ENCODE measurements at regions of chr14 and their contacts with region 1.

Region 1: DNA sequence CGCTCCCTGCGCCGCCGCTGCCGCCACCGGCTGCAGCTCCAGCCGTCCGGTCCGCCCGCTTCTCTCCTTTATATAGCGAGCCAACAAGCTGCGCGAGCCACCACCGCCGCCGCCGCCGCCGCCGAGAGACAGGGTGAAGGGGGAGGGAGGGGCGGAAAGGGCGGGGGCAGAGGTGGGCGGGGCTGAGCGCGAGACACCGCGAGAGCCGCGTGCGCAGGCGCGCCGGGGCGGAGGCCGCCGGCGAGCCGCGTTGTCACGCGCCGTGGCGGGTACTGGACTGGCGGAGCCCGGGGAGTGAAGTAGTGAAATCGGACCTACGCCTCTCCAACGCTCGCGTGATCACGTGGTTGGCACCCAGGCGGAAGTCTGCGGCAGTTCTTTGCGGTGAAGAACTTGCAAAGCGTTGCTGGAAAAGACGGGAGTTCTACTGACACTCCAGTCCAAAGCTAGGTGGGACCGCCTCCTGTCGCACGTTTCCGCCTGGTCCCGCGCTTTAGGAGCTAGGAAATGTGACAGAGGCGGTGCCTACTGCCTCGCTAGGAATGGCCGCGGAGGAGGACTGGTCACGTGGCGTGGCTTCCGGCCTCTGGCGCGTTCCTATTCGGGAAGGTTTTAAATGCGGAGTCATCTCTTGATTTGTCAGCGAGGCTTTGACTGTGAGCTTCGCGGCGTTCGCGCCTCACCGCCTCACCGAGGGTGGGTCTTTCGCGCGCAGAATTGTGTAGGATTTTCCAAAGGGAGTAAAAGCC is at the start of gene GTF2A1:
- DNase-seq: peak; percentile 77
- ATAC-seq: peak; percentile 92
- H3K4me3 ChIP-seq: peak within 1 kb of the TSS; percentile 70 to 96
- H3K27ac ChIP-seq: peak within 1 kb of the TSS; percentile 95
- H3K4me1 ChIP-seq: peaks cover 7% of the 10 kb centered on the region
- H3K27me3 ChIP-seq: no peaks in the 10 kb centered on the region
- CTCF ChIP-seq: no peak
- total RNA-seq, gene GTF2A1: 34.4 TPM

Region 2: GRCh38 chr14:80718940-80719339 is 502.1 kb before region 1 on chr14:
- CTCF ChIA-PET with region 1: no interaction called
- POLR2A ChIA-PET with region 1: no interaction called
- in situ Hi-C with region 1: no loop called
- intact Hi-C with region 1: no loop called
- DNase-seq: no peak
- ATAC-seq: no peak
- H3K4me3 ChIP-seq: no peak overlapping the region
- H3K27ac ChIP-seq: no peak overlapping the region
- H3K4me1 ChIP-seq: no peaks in the 10 kb centered on the region
- H3K27me3 ChIP-seq: no peaks in the 10 kb centered on the region
- CTCF ChIP-seq: no peak

Region 3: DNA sequence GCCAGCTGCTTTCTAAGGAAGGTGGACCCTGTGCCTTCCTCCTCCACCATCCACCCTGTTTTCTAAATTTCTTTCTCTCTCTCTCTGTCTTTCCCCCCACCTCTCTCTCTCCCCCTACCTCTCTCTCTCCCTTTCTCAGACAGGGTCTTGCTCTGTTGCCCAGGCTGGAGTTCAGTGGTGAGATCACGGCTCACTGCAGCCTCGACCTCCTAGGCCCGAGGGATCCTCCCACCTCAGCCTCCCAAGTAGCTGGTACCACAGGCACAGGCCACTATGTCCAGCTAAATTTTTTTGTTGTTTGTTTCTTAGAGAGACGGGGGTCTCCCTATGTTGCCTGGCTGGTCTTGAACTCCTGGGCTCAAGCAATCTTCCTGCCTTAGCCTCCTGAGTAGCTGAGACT is 238.9 kb after region 1 on chr14:
- CTCF ChIA-PET with region 1: no interaction called
- POLR2A ChIA-PET with region 1: interaction called, 12 read pairs
- in situ Hi-C with region 1: no loop called
- intact Hi-C with region 1: no loop called
- DNase-seq: no peak
- ATAC-seq: no peak
- H3K4me3 ChIP-seq: no peak overlapping the region
- H3K27ac ChIP-seq: no peak overlapping the region
- H3K4me1 ChIP-seq: no peaks in the 10 kb centered on the region
- H3K27me3 ChIP-seq: no peaks in the 10 kb centered on the region
- CTCF ChIP-seq: no peak

Region 4: DNA sequence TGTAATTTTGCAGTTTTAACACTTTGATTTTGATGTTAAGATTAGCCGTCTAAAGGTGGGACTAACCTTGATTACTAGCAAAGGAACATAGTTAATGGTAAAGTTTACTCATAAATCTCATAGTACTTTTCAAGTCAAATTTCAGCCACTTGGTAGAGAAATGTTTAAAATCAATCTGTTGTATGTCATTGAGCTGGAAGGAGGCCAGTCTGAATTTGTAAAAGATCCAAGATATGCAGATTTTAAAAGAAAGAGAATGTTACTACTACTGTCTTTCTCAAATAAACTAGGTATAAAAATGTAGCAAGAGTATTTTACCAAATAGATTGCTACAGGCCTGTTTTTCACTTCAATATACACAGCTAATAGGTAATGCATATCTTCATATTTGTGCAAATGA is 913.4 kb after region 1 on chr14:
- CTCF ChIA-PET with region 1: no interaction called
- POLR2A ChIA-PET with region 1: no interaction called
- in situ Hi-C with region 1: no loop called
- intact Hi-C with region 1: loop called (anchors 10 kb)
- DNase-seq: no peak
- ATAC-seq: no peak
- H3K4me3 ChIP-seq: no peak overlapping the region
- H3K27ac ChIP-seq: no peak overlapping the region
- H3K4me1 ChIP-seq: no peaks in the 10 kb centered on the region
- H3K27me3 ChIP-seq: no peaks in the 10 kb centered on the region
- CTCF ChIP-seq: no peak

Region 5: GRCh38 chr14:83025989-83026388 is 1805.0 kb after region 1 on chr14:
- CTCF ChIA-PET with region 1: no interaction called
- POLR2A ChIA-PET with region 1: no interaction called
- in situ Hi-C with region 1: no loop called
- intact Hi-C with region 1: no loop called
- DNase-seq: no peak
- ATAC-seq: no peak
- H3K4me3 ChIP-seq: no peak overlapping the region
- H3K27ac ChIP-seq: no peak overlapping the region
- H3K4me1 ChIP-seq: no peaks in the 10 kb centered on the region
- H3K27me3 ChIP-seq: no peaks in the 10 kb centered on the region
- CTCF ChIP-seq: no peak